WTC11 (cell line): ENCODE measurements at regions of chr5 and their contacts with region 1.

Region 1: DNA sequence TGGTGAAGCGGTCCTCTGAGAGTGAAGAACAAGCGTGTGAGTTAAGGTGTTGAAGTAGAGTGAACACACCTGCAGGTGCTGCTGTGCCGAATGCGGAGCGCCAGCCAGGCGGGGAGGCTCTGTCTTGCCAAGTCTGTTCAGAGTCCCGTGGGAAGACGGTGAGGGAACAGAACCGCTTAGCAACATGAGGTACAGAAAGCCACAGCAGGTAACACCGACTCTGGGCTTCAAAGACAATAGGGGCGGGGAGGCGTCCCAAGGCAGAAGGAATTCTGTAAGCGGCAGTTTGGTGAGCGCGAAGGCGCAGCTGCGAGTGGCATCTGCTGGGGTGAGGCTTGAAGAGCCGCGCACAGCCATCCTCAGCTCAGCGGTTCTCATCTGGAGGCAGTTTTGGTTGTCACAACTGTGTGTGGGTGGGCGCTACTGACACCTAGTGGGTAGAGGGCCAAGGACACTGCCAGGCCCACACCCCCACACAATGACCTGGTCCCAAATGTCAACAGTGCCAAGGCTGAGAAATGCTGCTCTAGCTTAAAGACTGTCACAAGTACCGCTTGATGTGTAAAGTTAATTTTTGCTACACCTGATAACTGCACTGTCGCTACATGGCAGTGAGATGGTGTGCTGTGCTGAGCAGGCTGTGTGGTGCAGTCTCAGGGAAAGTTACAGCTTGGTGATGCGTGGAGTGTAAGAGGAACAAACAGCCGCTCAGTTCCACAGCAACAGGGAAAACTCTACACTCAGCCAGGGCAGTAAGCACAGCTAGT is 67.4 kb upstream of the TBC1D9B start:
- DNase-seq: peak; percentile 72
- ATAC-seq: peak; percentile 98
- H3K4me3 Mint-ChIP-seq: no peak overlapping the region
- H3K27ac Mint-ChIP-seq: peak overlapping the region; percentile 90
- H3K4me1 Mint-ChIP-seq: peaks cover 7% of the 10 kb centered on the region; the same call in 1 of the 2 replicates
- H3K27me3 Mint-ChIP-seq: no peaks in the 10 kb centered on the region
- CTCF ChIP-seq: no peak

Region 2: GRCh38 chr5:179907570-179908324 is 67.4 kb before region 1 on chr5 and contains the start of gene TBC1D9B:
- CTCF ChIA-PET with region 1: interaction called, 10 read pairs
- POLR2A ChIA-PET with region 1: no interaction called
- DNase-seq: peak; percentile 60
- ATAC-seq: peak; percentile 68
- H3K4me3 Mint-ChIP-seq: peak within 1 kb of the TSS; percentile 81
- H3K27ac Mint-ChIP-seq: no peak within 1 kb of the TSS
- H3K4me1 Mint-ChIP-seq: peaks cover 3% of the 10 kb centered on the region; the same call in 1 of the 2 replicates
- H3K27me3 Mint-ChIP-seq: peaks cover under 1% of the 10 kb centered on the region; the same call in 1 of the 2 replicates
- CTCF ChIP-seq: peak; percentile 41; the same call in 1 of the 2 replicates
- total RNA-seq, gene TBC1D9B: 64.9 to 70.9 TPM (median 69.0 TPM) in 3 replicates

Region 3: DNA sequence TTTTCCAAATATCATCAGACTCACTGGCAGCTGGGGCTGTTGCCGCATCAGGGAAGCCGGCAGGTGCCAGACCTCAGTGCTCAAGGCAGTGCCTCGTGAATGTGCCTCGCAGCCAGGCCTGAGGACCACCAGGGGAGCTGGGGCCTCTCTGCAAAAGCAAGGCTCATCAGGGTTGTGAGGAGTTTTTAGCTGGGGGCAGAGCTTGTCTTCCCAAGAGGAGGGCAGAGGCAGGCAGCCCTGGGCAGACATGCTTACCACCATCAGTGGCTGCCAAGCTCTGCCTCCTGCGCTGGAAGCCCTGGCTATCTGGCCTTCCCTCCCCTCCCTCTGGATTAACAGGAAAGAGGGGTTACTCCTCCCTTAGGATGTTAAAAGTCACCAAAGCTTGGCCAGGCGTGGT is 58.6 kb before region 1 on chr5:
- CTCF ChIA-PET with region 1: interaction called, 11 read pairs
- POLR2A ChIA-PET with region 1: no interaction called
- DNase-seq: no peak
- ATAC-seq: peak; percentile 17; the same call in 1 of the 2 replicates
- H3K4me3 Mint-ChIP-seq: no peak overlapping the region
- H3K27ac Mint-ChIP-seq: no peak overlapping the region
- H3K4me1 Mint-ChIP-seq: peaks cover 27% of the 10 kb centered on the region
- H3K27me3 Mint-ChIP-seq: peaks cover 3% of the 10 kb centered on the region; the same call in 1 of the 2 replicates
- CTCF ChIP-seq: no peak

Region 4: GRCh38 chr5:180053061-180053602 is 78.0 kb after region 1 on chr5:
- CTCF ChIA-PET with region 1: no interaction called
- POLR2A ChIA-PET with region 1: no interaction called
- DNase-seq: no peak
- ATAC-seq: no peak
- H3K4me3 Mint-ChIP-seq: no peak overlapping the region
- H3K27ac Mint-ChIP-seq: peak overlapping the region; percentile 12
- H3K4me1 Mint-ChIP-seq: peaks cover 73% of the 10 kb centered on the region
- H3K27me3 Mint-ChIP-seq: no peaks in the 10 kb centered on the region
- CTCF ChIP-seq: no peak